ENCODE measurements at regions of chr9 and their contacts with region 1.

Region 1: GRCh38 chr9:98775831-98776441 is 20.4 kb downstream of the ANKS6 start:
- DNase-seq: peak; percentile 88
- H3K4me3 ChIP-seq: no peak overlapping the region; a peak in 1 of 4 replicates
- H3K27ac ChIP-seq: no peak overlapping the region
- H3K4me1 ChIP-seq: no peaks in the 10 kb centered on the region
- H3K27me3 ChIP-seq: no peaks in the 10 kb centered on the region
- CTCF ChIP-seq: peak; percentile 89
- EP300 ChIP-seq: no peak
- RAD21 ChIP-seq: peak; percentile 81

Region 2: DNA sequence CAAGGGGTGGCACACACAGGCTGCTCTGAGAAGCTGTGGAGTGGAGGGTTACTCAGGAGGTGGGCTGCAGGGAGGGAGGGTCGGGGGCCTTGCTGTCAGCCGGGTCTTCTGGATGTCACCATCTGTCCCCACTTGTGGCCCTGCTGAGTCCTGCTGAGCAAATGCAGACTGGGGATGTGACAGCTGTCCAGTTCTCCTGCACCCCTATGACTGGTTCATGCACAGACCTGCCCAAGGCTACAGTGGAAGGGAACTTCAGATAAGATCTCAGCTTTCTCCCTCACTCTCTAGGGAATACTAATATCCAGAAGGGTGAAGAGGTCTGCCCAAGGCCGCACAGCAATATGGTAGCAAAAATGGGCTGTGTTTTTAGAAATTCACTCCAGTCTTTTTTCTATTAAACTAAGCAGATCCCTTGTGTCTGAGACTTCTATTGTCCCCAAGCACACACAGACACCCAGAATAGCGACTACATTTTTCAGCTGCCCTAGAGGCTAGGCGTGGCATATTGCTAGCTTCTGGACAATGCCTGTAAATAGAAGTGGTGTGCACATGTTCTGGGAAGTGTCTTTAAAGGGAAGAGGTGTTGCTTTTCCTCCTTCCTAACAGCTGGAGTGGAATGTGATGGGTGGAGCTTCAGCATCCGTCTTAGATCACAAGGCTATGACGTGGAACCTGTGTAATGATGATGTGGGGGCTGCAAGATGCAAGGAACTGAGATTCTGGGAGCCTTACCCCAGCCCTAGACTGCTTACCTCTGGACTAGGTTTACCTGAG is 469.4 kb before region 1 on chr9:
- CTCF ChIA-PET with region 1: interaction called, 11 read pairs
- POLR2A ChIA-PET with region 1: no interaction called
- DNase-seq: peak; percentile 51
- H3K4me3 ChIP-seq: no peak overlapping the region
- H3K27ac ChIP-seq: no peak overlapping the region
- H3K4me1 ChIP-seq: peaks cover 0 to 11% of the 10 kb centered on the region in 2 experiments; a peak in 1 of 4 replicates
- H3K27me3 ChIP-seq: no peaks in the 10 kb centered on the region
- CTCF ChIP-seq: no peak
- EP300 ChIP-seq: peak in 1 of 2 experiments; percentile 44; a peak in 1 of 4 replicates
- RAD21 ChIP-seq: no peak

Region 3: GRCh38 chr9:98326459-98327248 is 449.3 kb before region 1 on chr9:
- CTCF ChIA-PET with region 1: interaction called, 11 read pairs
- POLR2A ChIA-PET with region 1: no interaction called
- DNase-seq: no peak
- H3K4me3 ChIP-seq: no peak overlapping the region
- H3K27ac ChIP-seq: no peak overlapping the region
- H3K4me1 ChIP-seq: peaks cover 5 to 11% of the 10 kb centered on the region in 2 experiments; a peak in 3 of 4 replicates
- H3K27me3 ChIP-seq: no peaks in the 10 kb centered on the region
- CTCF ChIP-seq: no peak
- EP300 ChIP-seq: no peak
- RAD21 ChIP-seq: no peak

Region 4: GRCh38 chr9:98760231-98760630 is 15.7 kb before region 1 on chr9:
- CTCF ChIA-PET with region 1: interaction called, 29 read pairs
- POLR2A ChIA-PET with region 1: no interaction called
- DNase-seq: no peak
- H3K4me3 ChIP-seq: no peak overlapping the region
- H3K27ac ChIP-seq: no peak overlapping the region
- H3K4me1 ChIP-seq: no peaks in the 10 kb centered on the region
- H3K27me3 ChIP-seq: no peaks in the 10 kb centered on the region
- CTCF ChIP-seq: no peak
- EP300 ChIP-seq: no peak
- RAD21 ChIP-seq: no peak

Region 5: DNA sequence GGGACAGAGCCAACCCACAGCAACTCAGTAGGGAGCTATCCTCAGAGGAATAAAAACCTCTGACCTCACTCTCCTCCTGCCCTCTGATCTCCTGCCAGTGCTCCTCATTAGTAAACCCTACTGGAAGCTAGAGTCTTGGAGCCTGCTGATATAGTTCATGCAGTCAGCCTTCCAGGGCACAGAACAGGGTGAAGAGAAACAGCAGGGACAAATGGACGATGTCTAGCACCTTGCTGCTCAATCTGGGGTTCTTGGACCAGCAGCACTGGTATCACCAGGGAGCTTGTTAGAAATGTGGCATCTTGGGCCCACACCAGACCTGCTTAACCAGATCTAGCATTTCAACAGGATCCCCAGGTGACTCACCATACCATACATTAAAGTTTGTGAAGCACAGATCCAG is 26.0 kb after region 1 on chr9:
- CTCF ChIA-PET with region 1: interaction called, 11 read pairs
- POLR2A ChIA-PET with region 1: no interaction called
- DNase-seq: no peak
- H3K4me3 ChIP-seq: no peak overlapping the region
- H3K27ac ChIP-seq: no peak overlapping the region
- H3K4me1 ChIP-seq: peaks cover 0 to 11% of the 10 kb centered on the region in 2 experiments; a peak in 1 of 4 replicates
- H3K27me3 ChIP-seq: peaks cover 20% of the 10 kb centered on the region; the same call in 1 of the 2 replicates
- CTCF ChIP-seq: no peak
- EP300 ChIP-seq: no peak
- RAD21 ChIP-seq: no peak